HCT116 (cell line): ENCODE measurements at regions of chr1 and their contacts with region 1.

Region 1: GRCh38 chr1:173409613-173410012 is 67.5 kb upstream of the PRDX6 start:
- DNase-seq: no peak
- ATAC-seq: no peak
- H3K4me3 ChIP-seq: no peak overlapping the region
- H3K27ac ChIP-seq: no peak overlapping the region
- H3K4me1 ChIP-seq: peaks cover 4 to 16% of the 10 kb centered on the region in 2 experiments; a peak in 3 of 4 replicates
- H3K27me3 ChIP-seq: no peaks in the 10 kb centered on the region
- CTCF ChIP-seq: no peak
- POLR2A ChIP-seq: no peak
- RAD21 ChIP-seq: no peak

Region 2: DNA sequence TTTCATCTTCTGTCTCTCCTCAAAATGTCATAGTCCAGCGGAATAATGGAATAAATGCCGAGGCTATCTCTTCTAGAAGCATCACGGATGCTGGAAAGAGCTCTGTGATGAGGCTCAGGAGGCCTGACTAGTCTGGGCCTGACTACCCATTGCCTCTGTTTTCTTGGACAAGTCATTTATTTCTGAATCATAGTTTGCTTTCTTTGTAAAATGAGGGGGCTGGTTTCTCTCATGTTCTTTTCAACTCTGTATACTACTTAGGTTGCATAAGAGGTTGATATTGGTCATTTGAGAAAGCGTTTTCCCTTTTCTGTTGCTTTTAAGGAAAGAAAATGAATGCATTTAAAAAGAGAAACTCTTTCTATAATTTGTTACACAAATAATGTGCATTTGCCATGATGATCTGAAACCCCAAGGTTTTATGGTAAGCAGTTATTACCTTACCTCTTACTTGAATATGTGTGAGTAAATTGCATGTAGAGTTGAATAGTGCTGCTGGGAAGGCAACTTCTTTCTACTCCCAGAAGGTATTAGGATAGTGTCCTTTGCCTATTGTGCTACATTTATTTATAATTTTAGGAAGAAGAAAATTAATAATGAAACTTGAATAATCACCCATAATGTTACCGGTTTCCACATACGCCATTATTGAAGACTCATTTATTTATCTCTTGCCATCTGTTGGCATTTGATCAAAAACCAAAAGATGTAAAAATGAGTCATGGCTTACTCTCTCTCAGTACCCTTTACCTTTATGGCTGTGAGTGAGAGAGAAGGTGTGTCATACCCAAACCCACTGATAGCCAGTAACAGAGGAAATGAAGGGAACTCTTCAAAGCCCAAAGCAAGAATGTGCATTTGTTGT is 571.6 kb before region 1 on chr1:
- CTCF ChIA-PET with region 1: no interaction called
- POLR2A ChIA-PET with region 1: no interaction called
- RAD21 ChIA-PET with region 1: no interaction called
- intact Hi-C with region 1: loop called (anchors 10 kb)
- DNase-seq: peak; percentile 89
- ATAC-seq: peak; percentile 92
- H3K4me3 ChIP-seq: peak overlapping the region in 1 of 2 experiments; percentile 11; a peak in 2 of 4 replicates
- H3K27ac ChIP-seq: peak overlapping the region; percentile 97
- H3K4me1 ChIP-seq: peaks cover 49 to 75% of the 10 kb centered on the region in 2 experiments
- H3K27me3 ChIP-seq: no peaks in the 10 kb centered on the region
- CTCF ChIP-seq: no peak
- POLR2A ChIP-seq: no peak
- RAD21 ChIP-seq: no peak